B cell (primary cell): ENCODE measurements at regions of chr1 and their contacts with region 1.

Region 1: DNA sequence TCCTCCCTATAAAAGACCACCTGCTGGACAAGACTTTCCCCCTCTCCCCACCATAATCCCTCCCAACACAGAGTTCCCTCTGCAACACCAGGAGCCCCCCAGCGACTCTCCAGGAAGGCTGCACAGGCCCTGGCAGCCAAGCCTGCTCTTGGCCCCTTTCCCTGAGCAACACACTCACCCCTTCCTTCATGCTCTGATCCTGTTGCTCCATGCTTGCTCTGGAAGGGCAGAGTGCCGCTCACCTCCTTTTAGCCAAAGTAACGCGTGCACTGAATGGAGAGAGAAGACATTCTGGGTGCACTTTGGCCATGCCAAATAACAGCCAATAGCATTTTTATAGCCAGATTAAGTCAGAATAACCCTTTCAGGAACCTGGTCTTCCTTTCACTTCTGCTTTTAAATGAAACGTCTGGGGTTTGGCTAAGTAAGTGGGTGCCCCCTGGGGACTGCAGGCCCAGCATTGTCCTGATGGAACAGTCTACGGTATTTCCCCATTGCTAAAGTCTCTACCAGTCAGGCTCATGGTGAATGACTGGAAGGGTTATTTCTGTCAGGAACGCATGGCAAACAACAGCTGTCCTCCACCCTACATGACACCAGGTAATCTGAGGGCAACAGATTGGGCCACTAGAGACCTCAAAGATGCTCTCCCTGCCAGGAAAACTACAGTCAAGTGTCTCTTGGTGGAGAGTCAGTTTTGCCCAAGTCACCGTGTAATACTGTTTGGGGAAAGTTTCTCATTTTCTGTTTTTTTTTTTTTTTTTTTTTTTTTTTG is at the start of gene SLC2A5:
- DNase-seq: peak; percentile 89
- ATAC-seq: peak; percentile 98
- H3K4me3 ChIP-seq: peak within 1 kb of the TSS; percentile 22 to 70 (median 65)
- H3K4me3 Mint-ChIP-seq: peak within 1 kb of the TSS; percentile 95
- H3K27ac ChIP-seq: peak within 1 kb of the TSS; percentile 71 to 78
- H3K27ac Mint-ChIP-seq: peak within 1 kb of the TSS; percentile 84
- H3K4me1 ChIP-seq: peaks cover 49 to 58% of the 10 kb centered on the region in 2 donors
- H3K4me1 Mint-ChIP-seq: peaks cover 69% of the 10 kb centered on the region
- H3K27me3 ChIP-seq: no peaks in the 10 kb centered on the region
- H3K27me3 Mint-ChIP-seq: no peaks in the 10 kb centered on the region
- CTCF ChIP-seq: no peak
- total RNA-seq, gene SLC2A5: 28.8 and 29.5 TPM in 2 replicates

Region 2: GRCh38 chr1:8825985-8826481 is 243.5 kb before region 1 on chr1:
- CTCF ChIA-PET with region 1: no interaction called
- POLR2A ChIA-PET with region 1: interaction called, 10 read pairs
- intact Hi-C with region 1: no loop called
- DNase-seq: no peak
- ATAC-seq: no peak
- H3K4me3 ChIP-seq: no peak overlapping the region
- H3K4me3 Mint-ChIP-seq: no peak overlapping the region
- H3K27ac ChIP-seq: no peak overlapping the region
- H3K27ac Mint-ChIP-seq: no peak overlapping the region
- H3K4me1 ChIP-seq: peaks cover 8% of the 10 kb centered on the region in 2 donors
- H3K4me1 Mint-ChIP-seq: peaks cover 9% of the 10 kb centered on the region
- H3K27me3 ChIP-seq: no peaks in the 10 kb centered on the region
- H3K27me3 Mint-ChIP-seq: peaks cover 15% of the 10 kb centered on the region
- CTCF ChIP-seq: no peak

Region 3: DNA sequence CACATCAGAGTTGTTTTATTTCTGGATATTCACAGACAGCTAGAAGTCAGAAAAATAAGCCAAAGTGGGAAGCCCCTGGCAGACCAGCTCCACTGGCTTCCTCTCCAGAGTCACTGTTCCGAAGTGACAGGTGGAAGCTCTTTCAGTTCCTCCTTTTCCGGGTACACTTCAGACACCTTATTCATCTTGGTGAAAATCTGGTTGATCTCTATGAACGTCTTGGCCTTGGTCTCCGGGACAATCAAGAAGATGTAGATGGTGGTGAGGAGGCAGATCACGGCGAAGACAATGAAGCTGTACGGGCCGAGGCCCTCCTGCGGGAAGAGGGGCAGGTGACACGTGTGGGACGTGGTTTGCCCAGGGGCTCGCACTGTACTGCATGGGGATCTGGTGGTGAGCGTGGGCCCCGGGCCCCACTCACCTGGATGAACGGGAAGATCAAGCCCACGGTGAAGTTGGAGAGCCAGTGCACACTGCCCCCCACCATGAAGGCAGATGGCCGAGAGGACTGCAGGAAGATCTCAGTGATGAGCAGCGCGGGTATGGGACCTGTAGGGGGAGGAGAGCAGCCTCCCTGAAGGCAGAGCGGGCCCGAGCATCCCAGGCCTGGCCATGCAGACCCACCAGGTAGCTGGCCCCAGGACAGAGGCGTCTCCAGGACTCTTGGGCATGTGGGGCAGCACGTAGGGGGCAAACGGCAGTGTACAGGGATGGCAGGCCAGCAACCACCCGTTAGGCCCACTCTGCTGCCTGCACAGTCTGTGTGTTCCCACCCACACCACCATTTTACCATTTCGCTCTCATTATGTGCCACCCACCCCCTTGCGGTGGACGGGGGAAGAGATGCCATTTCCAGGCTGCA is 31.8 kb before region 1 on chr1:
- CTCF ChIA-PET with region 1: interaction called, 3 read pairs
- POLR2A ChIA-PET with region 1: no interaction called
- intact Hi-C with region 1: loop called (anchors 1 kb)
- DNase-seq: peak; percentile 77
- ATAC-seq: peak; percentile 65
- H3K4me3 ChIP-seq: peak overlapping the region in 3 of 5 experiments; percentile 15 to 18 (median 16)
- H3K4me3 Mint-ChIP-seq: peak overlapping the region; percentile 77
- H3K27ac ChIP-seq: peak overlapping the region; percentile 86 to 91
- H3K27ac Mint-ChIP-seq: peak overlapping the region; percentile 86
- H3K4me1 ChIP-seq: peaks cover 25 to 36% of the 10 kb centered on the region in 2 donors
- H3K4me1 Mint-ChIP-seq: peaks cover 45% of the 10 kb centered on the region
- H3K27me3 ChIP-seq: no peaks in the 10 kb centered on the region
- H3K27me3 Mint-ChIP-seq: no peaks in the 10 kb centered on the region
- CTCF ChIP-seq: no peak